IMR-90 (cell line): ENCODE measurements at regions of chr12 and their contacts with region 1.

Region 1: DNA sequence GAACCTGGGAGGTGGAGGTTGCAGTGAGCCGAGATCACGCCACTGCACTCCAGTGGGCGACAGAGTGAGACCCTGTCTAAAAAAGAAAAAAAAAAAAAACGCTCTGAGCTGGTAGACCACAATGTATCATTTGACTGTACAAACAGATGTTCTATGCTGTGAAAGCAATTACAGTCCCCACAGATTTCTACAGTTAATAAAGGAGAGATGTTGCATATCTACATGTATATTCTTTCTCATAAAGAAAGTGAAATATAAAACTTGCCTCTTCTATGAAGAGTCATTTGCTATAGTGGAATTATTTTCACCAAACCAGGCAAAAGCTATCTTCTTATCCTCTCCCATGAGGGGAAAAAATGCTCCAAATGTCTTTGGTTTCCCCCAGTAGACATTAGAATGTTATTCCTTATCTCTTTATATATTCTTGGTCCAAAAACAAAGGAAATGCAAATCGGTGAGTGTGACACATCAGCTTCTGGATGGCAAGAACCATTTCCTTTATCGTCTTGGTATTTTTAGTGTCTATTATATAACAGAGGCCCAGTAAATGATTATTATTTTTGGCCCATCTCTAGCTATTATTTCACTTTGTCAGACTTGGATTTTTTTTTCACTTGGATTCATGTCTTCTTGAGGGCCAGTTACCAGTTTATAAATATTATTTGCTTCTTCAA is 230.4 kb downstream of the SSPN start:
- DNase-seq: peak; percentile 8
- ATAC-seq: no peak
- H3K4me3 ChIP-seq: no peak overlapping the region
- H3K27ac ChIP-seq: no peak overlapping the region
- H3K4me1 ChIP-seq: peaks cover 2% of the 10 kb centered on the region; the same call in 1 of the 2 replicates
- H3K27me3 ChIP-seq: no peaks in the 10 kb centered on the region
- CTCF ChIP-seq: no peak
- POLR2A ChIP-seq: no peak
- RAD21 ChIP-seq: no peak

Region 2: GRCh38 chr12:26396402-26396801 is 29.3 kb before region 1 on chr12:
- CTCF ChIA-PET with region 1: no interaction called
- POLR2A ChIA-PET with region 1: no interaction called
- dilution Hi-C with region 1: no loop called
- in situ Hi-C with region 1: no loop called
- intact Hi-C with region 1: loop called (anchors 5 kb)
- DNase-seq: no peak
- ATAC-seq: no peak
- H3K4me3 ChIP-seq: no peak overlapping the region
- H3K27ac ChIP-seq: no peak overlapping the region
- H3K4me1 ChIP-seq: no peaks in the 10 kb centered on the region
- H3K27me3 ChIP-seq: no peaks in the 10 kb centered on the region
- CTCF ChIP-seq: no peak
- POLR2A ChIP-seq: no peak
- RAD21 ChIP-seq: no peak

Region 3: DNA sequence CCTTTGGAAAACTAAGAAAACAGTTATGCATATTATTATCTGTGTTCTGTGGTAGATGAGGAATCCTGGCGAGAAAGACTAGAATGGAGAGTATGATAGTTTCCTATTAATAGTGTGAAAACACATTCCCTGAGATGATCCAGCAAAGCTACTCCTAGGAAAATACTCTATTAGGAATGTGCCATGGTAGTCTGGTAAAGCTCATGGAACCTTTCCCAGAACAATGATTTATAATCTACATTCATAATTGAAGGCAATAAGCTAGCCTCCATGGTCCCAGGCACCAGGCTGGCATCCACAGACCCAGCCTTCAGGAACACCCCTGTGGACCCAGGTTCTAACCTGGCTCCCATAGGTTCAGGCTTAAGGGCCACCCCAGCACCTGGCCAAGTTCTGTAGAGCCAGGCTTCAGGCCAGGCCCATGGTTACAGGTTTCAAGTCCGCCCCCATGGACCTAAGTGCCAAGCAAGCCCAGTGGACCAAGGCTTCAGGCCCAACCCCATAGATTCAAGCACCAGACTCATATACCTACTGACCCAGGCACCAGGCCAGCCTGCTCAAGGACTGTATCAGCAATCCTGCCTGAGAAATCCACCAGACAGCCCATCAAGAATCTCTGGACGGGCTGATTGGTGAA is 335.1 kb after region 1 on chr12:
- CTCF ChIA-PET with region 1: no interaction called
- POLR2A ChIA-PET with region 1: no interaction called
- dilution Hi-C with region 1: no loop called
- in situ Hi-C with region 1: no loop called
- intact Hi-C with region 1: no loop called
- DNase-seq: no peak
- ATAC-seq: no peak
- H3K4me3 ChIP-seq: no peak overlapping the region
- H3K27ac ChIP-seq: no peak overlapping the region
- H3K4me1 ChIP-seq: no peaks in the 10 kb centered on the region
- H3K27me3 ChIP-seq: no peaks in the 10 kb centered on the region
- CTCF ChIP-seq: no peak
- POLR2A ChIP-seq: no peak
- RAD21 ChIP-seq: no peak